GM13976 (cell line): ENCODE measurements at regions of chr14 and their contacts with region 1.

Region 1: DNA sequence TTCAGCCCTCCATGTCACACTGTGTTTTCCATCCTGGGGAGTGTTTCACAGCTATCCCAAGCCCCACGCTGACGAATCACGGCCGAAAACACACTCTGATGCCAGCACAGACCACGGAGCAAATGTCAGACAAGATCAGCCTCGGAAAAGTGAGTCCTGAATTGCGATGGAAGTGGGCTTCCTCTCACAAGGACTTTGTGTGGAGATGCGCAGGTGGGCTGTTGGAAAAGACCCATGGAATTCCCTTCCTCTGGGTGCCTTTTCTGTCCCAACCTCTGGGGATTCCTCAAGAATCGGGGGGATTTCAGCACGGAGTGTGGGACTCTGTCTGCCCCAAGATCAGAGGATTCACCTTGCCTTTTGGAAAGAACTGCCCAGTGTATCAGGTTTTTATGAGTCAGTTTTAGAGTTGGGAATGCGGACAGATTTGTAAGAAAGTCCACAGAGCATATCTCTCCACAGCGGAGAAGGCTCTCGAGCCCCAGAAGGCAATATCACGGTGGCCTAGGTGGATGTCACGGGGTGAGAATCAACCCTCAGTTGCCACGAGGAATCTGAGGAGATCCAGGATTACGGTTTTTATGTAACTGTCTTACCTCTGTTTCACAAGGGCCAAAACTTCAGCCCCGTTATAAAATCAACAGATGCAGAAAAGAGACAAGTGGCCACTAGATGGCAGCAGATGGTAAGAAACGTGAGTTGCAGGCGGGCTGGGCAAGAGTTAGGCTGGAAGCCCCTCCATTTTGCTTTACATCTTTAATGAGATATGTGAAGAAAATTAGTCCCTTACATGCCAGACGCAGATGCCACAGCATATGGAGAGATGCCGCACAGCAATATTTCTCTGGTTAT is 201.9 kb downstream of the DAD1 start:
- DNase-seq: peak; percentile 81
- CTCF ChIP-seq: peak; percentile 67

Region 2: DNA sequence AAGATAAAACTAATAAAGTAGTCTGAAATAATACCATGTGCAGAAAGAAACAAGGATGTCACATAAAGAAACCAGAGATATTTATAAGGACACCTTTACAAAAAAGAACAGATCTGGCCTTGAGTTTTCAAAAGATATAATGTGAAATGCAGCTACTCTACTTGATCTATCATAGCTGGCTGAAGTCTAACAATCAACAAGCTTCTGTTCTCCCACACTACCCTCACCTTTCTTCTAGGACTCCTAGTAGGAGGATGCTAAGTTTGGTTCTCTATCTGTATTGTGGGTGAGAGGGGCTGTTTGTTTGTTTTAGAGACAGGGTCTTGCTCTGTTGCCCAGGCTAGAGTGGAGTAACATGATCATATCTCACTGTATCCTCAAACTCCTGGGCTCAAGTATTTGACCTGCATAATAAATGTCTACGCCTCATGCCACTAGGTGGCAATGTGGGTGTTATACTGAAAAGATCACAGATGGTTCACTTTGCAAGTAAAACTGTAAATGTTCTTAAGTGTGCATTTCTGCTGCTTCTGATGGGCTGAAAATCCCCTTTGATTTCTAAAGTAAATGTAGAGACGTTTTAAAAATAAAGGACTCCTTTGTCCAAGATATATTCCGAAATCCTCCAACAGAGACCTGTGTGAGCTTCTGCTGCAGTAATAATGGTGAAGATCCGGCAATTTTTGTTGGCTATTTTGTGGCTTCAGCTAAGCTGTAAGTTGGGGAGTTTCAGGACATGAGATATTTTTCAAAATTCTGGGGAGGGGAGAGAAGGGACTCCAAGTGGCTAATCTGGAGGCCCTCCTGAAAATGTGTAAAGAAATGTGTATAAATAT is 67.4 kb before region 1 on chr14:
- in situ Hi-C with region 1: loop called (anchors 5 kb)
- DNase-seq: peak; percentile 51
- CTCF ChIP-seq: peak; percentile 71

Region 3: GRCh38 chr14:22472935-22473854 is 86.0 kb after region 1 on chr14:
- in situ Hi-C with region 1: loop called (anchors 5 kb)
- DNase-seq: peak; percentile 75
- CTCF ChIP-seq: peak; percentile 61

Region 4: DNA sequence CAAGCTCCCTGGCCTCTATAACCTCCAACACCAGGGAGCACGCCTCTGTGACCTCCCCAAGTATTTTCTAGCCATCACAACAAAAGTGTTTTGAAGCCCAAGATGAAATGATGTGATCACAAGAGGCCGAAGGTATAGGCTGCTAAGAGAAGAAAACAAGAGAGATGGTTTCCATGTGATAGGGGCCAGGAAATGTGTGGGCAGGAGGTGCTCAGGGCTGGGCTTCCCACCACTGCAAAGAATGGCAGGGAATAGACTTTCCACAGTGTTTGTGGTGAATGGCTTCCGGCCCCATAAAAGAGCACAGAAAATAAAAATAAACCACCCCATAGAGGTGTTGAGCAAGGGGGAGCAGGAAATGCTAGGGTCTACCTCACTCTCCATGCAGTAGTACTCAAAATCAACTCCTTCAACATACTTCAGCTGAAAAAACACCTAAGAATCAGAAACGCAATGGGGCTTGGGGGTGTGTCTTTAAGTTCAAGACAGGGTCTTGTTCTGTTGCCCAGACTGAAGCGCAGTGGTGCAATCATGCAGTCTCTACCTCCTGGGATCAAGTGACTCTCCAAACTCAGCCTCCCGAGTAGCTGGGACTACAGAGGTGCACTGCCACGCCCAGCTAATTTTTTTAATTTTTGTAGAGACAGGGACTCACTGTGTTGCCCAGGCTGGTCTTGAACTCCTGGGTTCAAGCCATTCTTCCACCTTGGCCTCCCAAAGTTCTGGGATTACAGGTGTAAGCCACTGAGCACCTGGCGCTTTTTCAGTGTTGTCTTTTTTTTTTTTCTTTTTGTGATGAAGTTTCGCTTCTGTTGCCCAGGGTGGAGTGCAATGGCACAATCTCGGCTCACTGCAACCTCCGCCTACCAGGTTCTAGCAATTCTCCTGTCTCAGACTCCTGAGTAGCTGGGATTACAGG is 174.8 kb after region 1 on chr14:
- in situ Hi-C with region 1: loop called (anchors 5 kb)
- DNase-seq: peak; percentile 51
- CTCF ChIP-seq: no peak

Region 5: GRCh38 chr14:22852940-22853767 is 466.0 kb after region 1 on chr14:
- in situ Hi-C with region 1: loop called (anchors 10 kb)
- DNase-seq: peak; percentile 88
- CTCF ChIP-seq: peak; percentile 98